Ascending aorta (tissue), 2 donors: ENCODE measurements at regions of chr20 and their contacts with region 1.

Region 1: GRCh38 chr20:21235484-21236445 is 67.4 kb upstream of the XRN2 start:
- DNase-seq: peak in 1 of 2 donors; percentile 72
- H3K4me3 ChIP-seq: no peak overlapping the region
- H3K27ac ChIP-seq: no peak overlapping the region
- H3K4me1 ChIP-seq: peaks cover 0 to 3% of the 10 kb centered on the region in 2 donors
- H3K27me3 ChIP-seq: no peaks in the 10 kb centered on the region
- CTCF ChIP-seq: peak; percentile 37 to 63 (median 55)

Region 2: DNA sequence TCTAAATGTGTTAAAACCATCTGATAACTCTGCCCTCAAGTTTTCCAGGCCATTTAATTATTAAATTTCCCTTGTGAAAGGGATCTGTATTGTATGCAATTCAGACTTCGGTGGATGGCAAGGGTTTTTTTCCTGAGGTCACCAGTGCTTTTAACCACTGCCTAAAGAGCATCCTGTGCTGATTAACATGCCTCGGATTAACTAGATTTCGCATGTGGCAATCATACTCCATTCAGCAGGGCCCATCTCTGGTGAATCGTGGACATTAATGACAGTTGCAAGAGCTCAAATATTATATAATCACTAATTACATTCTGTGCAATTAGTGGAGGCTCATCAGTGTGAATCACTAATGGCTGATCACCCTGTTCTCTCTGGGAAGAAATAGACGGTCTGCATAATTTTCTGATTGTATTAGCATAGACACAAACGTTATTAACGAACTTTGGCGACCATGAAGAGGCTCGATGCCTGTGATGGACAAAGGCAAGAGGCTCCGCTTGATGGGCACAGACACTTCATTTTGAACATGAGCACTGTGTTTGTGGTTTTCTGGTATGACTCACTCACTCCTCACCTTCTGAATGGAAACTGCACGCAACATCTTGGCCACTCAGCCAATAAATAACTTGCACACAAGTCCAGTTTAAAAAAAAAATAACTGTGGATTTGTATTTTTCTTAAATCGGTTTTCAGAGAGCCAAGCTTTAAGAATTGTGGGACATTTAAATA is 161.0 kb before region 1 on chr20:
- intact Hi-C with region 1: no loop called
- DNase-seq: no peak
- H3K4me3 ChIP-seq: no peak overlapping the region
- H3K27ac ChIP-seq: no peak overlapping the region
- H3K4me1 ChIP-seq: no peaks in the 10 kb centered on the region
- H3K27me3 ChIP-seq: no peaks in the 10 kb centered on the region
- CTCF ChIP-seq: no peak

Region 3: GRCh38 chr20:21182832-21183563 is 52.8 kb before region 1 on chr20:
- intact Hi-C with region 1: no loop called
- DNase-seq: peak in 1 of 2 donors; percentile 69
- H3K4me3 ChIP-seq: no peak overlapping the region
- H3K27ac ChIP-seq: peak overlapping the region; percentile 55 to 79
- H3K4me1 ChIP-seq: peaks cover 0 to 14% of the 10 kb centered on the region in 2 donors
- H3K27me3 ChIP-seq: no peaks in the 10 kb centered on the region
- CTCF ChIP-seq: no peak

Region 4: GRCh38 chr20:21571841-21572690 is 336.3 kb after region 1 on chr20:
- intact Hi-C with region 1: loop called (anchors 5 kb)
- DNase-seq: peak in 1 of 2 donors; percentile 50
- H3K4me3 ChIP-seq: no peak overlapping the region
- H3K27ac ChIP-seq: no peak overlapping the region
- H3K4me1 ChIP-seq: no peaks in the 10 kb centered on the region
- H3K27me3 ChIP-seq: no peaks in the 10 kb centered on the region
- CTCF ChIP-seq: peak; percentile 24 to 79 (median 66)